Mammary epithelial cell (primary cell): ENCODE measurements at regions of chr13 and their contacts with region 1.

Region 1: GRCh38 chr13:45310341-45311125 is 30.4 kb downstream of the TPT1 start:
- DNase-seq: no peak
- H3K4me3 ChIP-seq: no peak overlapping the region
- H3K27ac ChIP-seq: no peak overlapping the region
- H3K4me1 ChIP-seq: peaks cover 16% of the 10 kb centered on the region
- H3K27me3 ChIP-seq: no peaks in the 10 kb centered on the region
- CTCF ChIP-seq: no peak

Region 2: DNA sequence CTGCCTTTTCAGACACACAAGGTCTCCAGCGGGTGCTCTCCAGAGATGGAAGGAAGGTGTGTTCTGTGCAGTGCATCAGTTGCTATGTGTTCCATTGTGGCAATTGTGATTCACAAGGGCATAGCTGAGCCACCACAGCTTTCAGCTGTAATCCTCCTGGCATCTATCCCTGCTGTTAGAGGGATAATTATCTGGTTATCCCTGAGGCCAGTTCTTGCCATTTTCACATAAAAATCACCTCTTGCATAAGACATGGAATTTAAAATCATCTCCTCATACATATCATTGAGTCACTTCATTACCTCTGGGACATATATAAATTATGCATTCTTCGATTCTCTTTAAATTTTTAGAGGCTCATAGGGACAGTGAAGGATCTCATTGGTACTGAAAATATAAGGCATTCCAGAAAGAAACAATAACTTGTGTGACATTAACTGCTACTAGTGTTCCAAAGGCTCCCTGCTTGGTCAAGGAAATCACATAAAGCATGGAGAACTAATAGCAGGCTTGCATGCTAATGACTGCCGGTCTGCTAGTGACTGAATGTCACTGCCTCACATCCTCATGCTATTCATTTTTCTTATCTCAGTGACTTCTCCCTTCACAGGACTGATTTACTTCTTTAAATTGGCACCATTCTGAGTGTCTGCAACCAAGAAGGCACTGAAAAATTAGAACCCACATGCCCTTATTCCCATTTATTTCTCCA is 1737.7 kb before region 1 on chr13:
- CTCF ChIA-PET with region 1: no interaction called
- dilution Hi-C with region 1: no loop called
- in situ Hi-C with region 1: no loop called
- intact Hi-C with region 1: no loop called
- DNase-seq: peak; percentile 69
- H3K4me3 ChIP-seq: no peak overlapping the region
- H3K27ac ChIP-seq: peak overlapping the region; percentile 63
- H3K4me1 ChIP-seq: peaks cover 25% of the 10 kb centered on the region
- H3K27me3 ChIP-seq: no peaks in the 10 kb centered on the region
- CTCF ChIP-seq: no peak

Region 3: GRCh38 chr13:44917589-44918325 is 392.8 kb before region 1 on chr13:
- CTCF ChIA-PET with region 1: no interaction called
- dilution Hi-C with region 1: no loop called
- in situ Hi-C with region 1: no loop called
- intact Hi-C with region 1: loop called (anchors 1 kb)
- DNase-seq: peak; percentile 95
- H3K4me3 ChIP-seq: peak overlapping the region; percentile 54 to 58 (median 56)
- H3K27ac ChIP-seq: peak overlapping the region; percentile 84
- H3K4me1 ChIP-seq: peaks cover 26% of the 10 kb centered on the region
- H3K27me3 ChIP-seq: no peaks in the 10 kb centered on the region
- CTCF ChIP-seq: peak in 1 of 2 donors; percentile 40

Region 4: DNA sequence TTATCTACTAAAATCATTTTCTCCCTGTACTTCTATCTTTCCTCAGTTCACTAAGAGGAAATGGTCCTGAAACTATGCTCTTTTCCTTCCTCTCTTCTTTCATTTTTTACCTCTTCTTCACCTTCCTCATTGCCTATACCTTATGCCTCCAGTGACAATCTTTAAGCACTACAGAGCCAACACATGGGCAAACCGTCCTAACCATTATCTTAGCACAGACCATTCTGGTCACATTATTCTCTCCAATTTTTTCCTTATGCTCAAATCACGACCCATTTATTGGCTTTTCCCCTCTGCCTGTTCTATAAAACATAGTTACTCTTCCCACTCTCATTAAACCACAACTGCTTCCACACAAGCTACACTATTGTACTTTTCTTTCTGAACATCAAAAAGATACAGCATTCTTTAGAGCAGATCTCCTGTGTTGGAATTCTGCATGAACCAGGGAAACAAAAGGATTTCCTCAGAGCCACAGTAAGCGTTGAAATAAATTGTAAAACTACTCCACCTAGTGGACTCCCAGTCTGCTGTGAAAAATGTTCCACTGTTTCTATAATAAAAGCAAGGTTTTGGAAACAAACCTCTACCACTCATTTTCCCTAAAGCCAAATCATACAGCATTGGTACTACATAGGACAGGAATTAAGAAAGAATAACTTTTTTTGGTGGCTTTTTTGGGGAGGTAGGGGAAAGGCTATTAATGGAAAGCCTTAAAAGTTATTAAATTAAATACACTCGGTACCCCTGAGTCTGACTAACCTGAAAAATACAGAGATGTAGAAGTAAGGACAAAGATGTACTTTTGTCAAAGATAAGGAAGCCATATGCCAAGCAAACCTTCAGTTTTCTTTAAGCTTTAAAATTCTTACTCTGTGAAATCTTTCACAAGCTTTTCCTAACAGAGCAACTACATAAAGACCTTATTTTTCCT is 340.7 kb before region 1 on chr13:
- CTCF ChIA-PET with region 1: no interaction called
- dilution Hi-C with region 1: no loop called
- in situ Hi-C with region 1: no loop called
- intact Hi-C with region 1: loop called (anchors 1 kb)
- DNase-seq: peak; percentile 28
- H3K4me3 ChIP-seq: no peak overlapping the region
- H3K27ac ChIP-seq: no peak overlapping the region
- H3K4me1 ChIP-seq: peaks cover 3% of the 10 kb centered on the region
- H3K27me3 ChIP-seq: no peaks in the 10 kb centered on the region
- CTCF ChIP-seq: peak; percentile 68 to 72

Region 5: GRCh38 chr13:45040622-45041021 is 269.9 kb before region 1 on chr13:
- CTCF ChIA-PET with region 1: no interaction called
- dilution Hi-C with region 1: loop called (anchors 5 kb)
- in situ Hi-C with region 1: loop called (anchors 5 to 10 kb)
- intact Hi-C with region 1: no loop called
- DNase-seq: no peak
- H3K4me3 ChIP-seq: no peak overlapping the region
- H3K27ac ChIP-seq: no peak overlapping the region
- H3K4me1 ChIP-seq: peaks cover 8% of the 10 kb centered on the region
- H3K27me3 ChIP-seq: no peaks in the 10 kb centered on the region
- CTCF ChIP-seq: no peak

Region 6: GRCh38 chr13:45047394-45048310 is 262.9 kb before region 1 on chr13:
- CTCF ChIA-PET with region 1: no interaction called
- dilution Hi-C with region 1: loop called (anchors 5 kb)
- in situ Hi-C with region 1: loop called (anchors 5 to 10 kb)
- intact Hi-C with region 1: loop called (anchors 1 kb)
- DNase-seq: peak; percentile 77
- H3K4me3 ChIP-seq: peak overlapping the region; percentile 48 to 59 (median 52)
- H3K27ac ChIP-seq: peak overlapping the region; percentile 16
- H3K4me1 ChIP-seq: peaks cover 9% of the 10 kb centered on the region
- H3K27me3 ChIP-seq: no peaks in the 10 kb centered on the region
- CTCF ChIP-seq: peak; percentile 92 to 94

Region 7: GRCh38 chr13:45162821-45163220 is 147.7 kb before region 1 on chr13:
- CTCF ChIA-PET with region 1: interaction called, 17 read pairs
- dilution Hi-C with region 1: no loop called
- in situ Hi-C with region 1: no loop called
- intact Hi-C with region 1: no loop called
- DNase-seq: peak; percentile 87
- H3K4me3 ChIP-seq: no peak overlapping the region
- H3K27ac ChIP-seq: peak overlapping the region; percentile 80
- H3K4me1 ChIP-seq: peaks cover 20% of the 10 kb centered on the region
- H3K27me3 ChIP-seq: no peaks in the 10 kb centered on the region
- CTCF ChIP-seq: no peak

Region 8: GRCh38 chr13:45280751-45281634 is 29.5 kb before region 1 on chr13:
- CTCF ChIA-PET with region 1: interaction called, 3 read pairs
- dilution Hi-C with region 1: no loop called
- in situ Hi-C with region 1: no loop called
- intact Hi-C with region 1: loop called (anchors 1 kb)
- DNase-seq: peak; percentile 84
- H3K4me3 ChIP-seq: no peak overlapping the region
- H3K27ac ChIP-seq: peak overlapping the region; percentile 27
- H3K4me1 ChIP-seq: peaks cover 20% of the 10 kb centered on the region
- H3K27me3 ChIP-seq: no peaks in the 10 kb centered on the region
- CTCF ChIP-seq: peak; percentile 95 to 96